Left colon (tissue), 2 donors: ENCODE measurements at regions of chr22 and their contacts with region 1.

Region 1: GRCh38 chr22:40116496-40117200 is 61.1 kb upstream of the TNRC6B start:
- DNase-seq: no peak
- ATAC-seq: no peak

Region 2: GRCh38 chr22:40177738-40178416 is 61.2 kb after region 1 on chr22 and contains the start of gene TNRC6B:
- intact Hi-C with region 1: loop called in 1 of 2 experiments (anchors 10 kb)
- DNase-seq: peak; percentile 53 to 87
- ATAC-seq: peak; percentile 91
- total RNA-seq, gene TNRC6B: 50.9 to 51.0 TPM